WTC11 (cell line): ENCODE measurements at regions of chr9 and their contacts with region 1.

Region 1: GRCh38 chr9:127779136-127779981 is 893 bp upstream of the SH2D3C start:
- DNase-seq: no peak
- ATAC-seq: peak; percentile 13; the same call in 1 of the 2 replicates
- H3K4me3 Mint-ChIP-seq: no peak overlapping the region
- H3K27ac Mint-ChIP-seq: no peak overlapping the region
- H3K4me1 Mint-ChIP-seq: peaks cover 23% of the 10 kb centered on the region
- H3K27me3 Mint-ChIP-seq: no peaks in the 10 kb centered on the region
- CTCF ChIP-seq: no peak

Region 2: GRCh38 chr9:127763918-127764384 is 15.4 kb before region 1 on chr9:
- CTCF ChIA-PET with region 1: interaction called, 38 read pairs
- POLR2A ChIA-PET with region 1: no interaction called
- DNase-seq: peak; percentile 78
- ATAC-seq: peak; percentile 78
- H3K4me3 Mint-ChIP-seq: no peak overlapping the region
- H3K27ac Mint-ChIP-seq: peak overlapping the region; percentile 8; the same call in 1 of the 2 replicates
- H3K4me1 Mint-ChIP-seq: peaks cover 44% of the 10 kb centered on the region
- H3K27me3 Mint-ChIP-seq: peaks cover 4% of the 10 kb centered on the region; the same call in 1 of the 2 replicates
- CTCF ChIP-seq: 0 out of 2 replicates have a peak, but pooled peaks have one; percentile 37

Region 3: DNA sequence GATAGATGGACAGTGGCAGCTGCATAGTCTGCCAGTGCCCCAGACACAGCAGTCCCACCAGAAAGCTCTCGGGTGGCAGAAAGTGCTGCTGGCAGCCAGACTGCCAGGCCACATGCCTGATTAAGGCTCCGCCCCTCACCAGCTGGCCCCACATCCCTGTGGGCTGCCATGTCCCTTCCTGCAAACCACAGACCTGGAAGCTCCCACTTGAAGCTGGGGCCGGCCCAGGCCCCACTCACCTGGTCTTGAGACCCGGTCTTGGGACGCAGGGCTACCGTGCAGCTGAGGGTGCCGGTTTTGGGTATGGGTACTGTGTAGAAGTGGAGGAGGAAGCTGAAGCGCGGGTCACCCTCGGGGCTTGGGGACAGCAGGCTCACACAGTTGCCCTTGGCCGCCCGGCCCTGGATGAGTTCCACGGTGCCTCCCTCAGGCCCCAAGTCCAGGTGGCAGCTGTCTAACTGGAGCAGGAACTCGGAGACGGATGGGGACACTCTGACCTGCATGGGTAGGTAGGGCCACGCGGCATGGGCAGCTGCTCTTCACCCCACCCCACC is 38.6 kb after region 1 on chr9:
- CTCF ChIA-PET with region 1: no interaction called
- POLR2A ChIA-PET with region 1: no interaction called
- DNase-seq: no peak
- ATAC-seq: no peak
- H3K4me3 Mint-ChIP-seq: no peak overlapping the region
- H3K27ac Mint-ChIP-seq: 0 out of 2 replicates have a peak overlapping the region, but pooled peaks have one; percentile 11
- H3K4me1 Mint-ChIP-seq: no peaks in the 10 kb centered on the region
- H3K27me3 Mint-ChIP-seq: no peaks in the 10 kb centered on the region
- CTCF ChIP-seq: no peak